ENCODE measurements at regions of chr7 and their contacts with region 1.

Region 1: GRCh38 chr7:48109848-48110663 is 21.0 kb downstream of the UPP1 start:
- DNase-seq: peak; percentile 93
- ATAC-seq: peak; percentile 93
- H3K4me3 Mint-ChIP-seq: no peak overlapping the region
- H3K27ac Mint-ChIP-seq: no peak overlapping the region
- H3K4me1 Mint-ChIP-seq: peaks cover 10% of the 10 kb centered on the region
- H3K27me3 Mint-ChIP-seq: no peaks in the 10 kb centered on the region

Region 2: DNA sequence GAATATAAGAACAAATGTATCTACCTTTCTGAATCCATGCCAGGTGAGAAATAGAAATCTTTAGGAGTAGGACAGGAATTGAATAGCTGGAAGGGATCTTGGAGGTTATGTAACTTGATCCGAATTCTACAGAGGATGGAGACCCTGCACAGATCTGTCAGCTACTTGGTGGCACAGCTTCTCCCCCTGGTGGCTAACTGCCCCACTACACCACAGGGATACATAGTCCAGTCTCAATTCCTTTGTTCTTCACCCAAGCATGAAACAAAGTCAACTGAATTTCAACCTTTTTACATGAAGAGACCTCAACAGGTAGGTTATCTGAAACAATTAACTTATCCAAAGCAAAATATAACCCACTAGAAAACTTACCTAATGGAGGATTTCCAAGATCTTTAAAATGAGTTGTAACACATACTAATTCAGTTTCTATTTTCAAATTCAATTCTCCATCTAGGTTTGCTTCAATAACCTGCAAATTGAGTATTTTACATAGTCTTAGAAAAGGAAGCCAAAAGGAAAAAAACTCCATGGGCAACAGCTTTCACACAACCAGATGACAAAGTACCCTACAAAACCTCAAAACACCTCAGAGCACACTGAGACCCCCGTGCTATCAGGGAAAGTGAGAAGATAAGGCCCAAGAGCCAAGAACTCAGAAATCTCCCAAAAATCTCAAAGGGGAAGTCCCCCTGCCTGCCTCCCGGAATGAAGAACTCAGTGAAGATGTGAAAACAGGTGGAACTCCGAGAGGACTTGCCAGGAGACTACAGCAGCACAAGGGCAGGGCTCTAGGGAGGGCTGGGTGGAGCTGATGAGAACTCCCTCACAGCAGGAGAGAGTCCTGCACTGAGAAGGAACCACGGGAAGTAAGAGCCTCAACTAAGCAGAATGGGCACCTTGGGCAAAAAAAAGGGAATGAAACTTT is 140.9 kb before region 1 on chr7:
- CTCF ChIA-PET with region 1: interaction called, 12 read pairs
- POLR2A ChIA-PET with region 1: no interaction called
- intact Hi-C with region 1: no loop called
- DNase-seq: peak; percentile 76
- ATAC-seq: peak; percentile 59
- H3K4me3 Mint-ChIP-seq: no peak overlapping the region
- H3K27ac Mint-ChIP-seq: no peak overlapping the region
- H3K4me1 Mint-ChIP-seq: peaks cover 32% of the 10 kb centered on the region
- H3K27me3 Mint-ChIP-seq: no peaks in the 10 kb centered on the region

Region 3: GRCh38 chr7:47979145-47979831 is 130.8 kb before region 1 on chr7 and contains the start of gene HUS1:
- CTCF ChIA-PET with region 1: interaction called, 9 read pairs
- POLR2A ChIA-PET with region 1: no interaction called
- intact Hi-C with region 1: loop called (anchors 1 kb)
- DNase-seq: peak; percentile 95
- ATAC-seq: peak; percentile 98
- H3K4me3 Mint-ChIP-seq: peak within 1 kb of the TSS; percentile 88
- H3K27ac Mint-ChIP-seq: peak within 1 kb of the TSS; percentile 98
- H3K4me1 Mint-ChIP-seq: peaks cover 25% of the 10 kb centered on the region
- H3K27me3 Mint-ChIP-seq: no peaks in the 10 kb centered on the region
- total RNA-seq, gene HUS1: 40.5 to 41.5 TPM

Region 4: DNA sequence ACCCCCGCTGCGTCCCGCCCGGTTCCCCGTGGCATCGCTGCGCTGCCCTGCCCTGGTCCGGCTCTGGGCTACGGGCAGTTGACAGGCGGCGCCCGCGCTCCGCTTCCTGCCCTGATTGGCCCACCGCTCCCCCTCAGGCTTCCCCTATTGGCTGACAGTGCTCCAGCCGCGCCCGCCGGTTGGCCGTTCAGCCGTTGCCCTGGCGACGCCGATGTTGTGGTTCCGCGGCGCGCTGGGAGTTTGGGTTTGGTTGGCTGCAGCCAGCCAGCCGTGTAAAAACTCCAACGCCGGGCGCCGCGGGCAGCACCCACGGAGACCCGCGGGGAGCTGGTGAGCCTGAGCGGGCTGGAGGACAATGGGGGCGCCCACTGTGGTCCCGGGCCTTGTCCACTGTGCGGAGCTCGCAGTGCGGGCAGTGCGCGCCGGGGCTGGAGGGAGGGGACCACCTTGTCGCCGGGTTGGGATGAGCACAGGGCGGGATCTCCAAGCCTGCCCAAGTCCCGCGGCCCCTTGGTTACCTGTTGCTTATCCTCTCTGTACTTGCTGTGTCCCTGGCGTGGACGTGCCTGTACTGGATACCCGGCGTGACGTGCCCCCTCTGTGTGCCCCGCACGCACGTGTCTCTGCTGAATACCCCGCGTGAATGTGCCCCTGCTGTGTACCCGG is 74.6 kb before region 1 on chr7 and contains the start of gene C7orf57:
- CTCF ChIA-PET with region 1: no interaction called
- POLR2A ChIA-PET with region 1: no interaction called
- intact Hi-C with region 1: loop called (anchors 1 to 2 kb)
- DNase-seq: peak; percentile 92
- ATAC-seq: peak; percentile 100
- H3K4me3 Mint-ChIP-seq: peak within 1 kb of the TSS; percentile 71
- H3K27ac Mint-ChIP-seq: no peak within 1 kb of the TSS
- H3K4me1 Mint-ChIP-seq: peaks cover 5% of the 10 kb centered on the region
- H3K27me3 Mint-ChIP-seq: peaks cover 36% of the 10 kb centered on the region
- total RNA-seq, gene C7orf57: 0.33 to 0.46 TPM

Measured in activated CD4-positive, alpha-beta T cell treated with anti-CD3 and anti-CD28 coated beads for 36 hours (primary cell).